ENCODE measurements at regions of chr20 and their contacts with region 1.

Region 1: DNA sequence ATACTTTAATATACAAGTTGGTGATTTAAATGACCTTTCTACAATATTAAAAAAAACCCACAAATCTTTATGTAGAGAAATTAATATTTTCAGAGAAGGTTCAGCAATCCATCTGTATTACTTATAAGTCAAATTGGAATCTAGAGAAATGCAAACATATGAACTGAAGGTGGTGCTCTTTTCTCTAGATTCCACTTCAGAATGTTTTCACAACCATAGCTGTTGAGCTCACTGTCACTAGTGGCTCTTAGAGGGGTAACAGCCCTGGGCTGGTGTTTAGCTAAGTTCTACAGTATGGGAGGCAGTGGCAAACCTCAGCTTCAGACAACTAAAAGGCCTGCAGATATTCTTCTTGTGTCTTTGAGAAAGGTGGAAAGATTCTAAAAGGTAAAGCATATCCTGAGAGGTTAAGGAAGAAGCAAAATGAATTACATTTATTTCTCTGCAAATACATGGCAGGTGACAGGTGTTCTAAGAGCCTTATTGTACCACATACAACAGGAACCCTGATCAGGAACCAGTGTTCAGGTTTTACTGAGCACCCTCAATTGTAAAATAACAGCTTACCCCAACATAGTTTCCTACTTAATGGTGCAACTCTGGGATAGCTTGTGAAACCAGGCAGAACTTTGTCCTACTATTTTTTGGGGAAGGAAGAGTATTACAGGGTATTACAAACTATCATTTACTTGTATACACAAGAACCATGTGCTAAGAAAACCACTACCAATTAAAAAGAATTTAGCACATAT is 56.6 kb upstream of the SAMHD1 start:
- DNase-seq: peak; percentile 50
- ATAC-seq: peak; percentile 89
- H3K4me3 Mint-ChIP-seq: no peak overlapping the region
- H3K27ac Mint-ChIP-seq: peak overlapping the region; percentile 73
- H3K4me1 Mint-ChIP-seq: peaks cover 34% of the 10 kb centered on the region
- H3K27me3 Mint-ChIP-seq: no peaks in the 10 kb centered on the region

Region 2: DNA sequence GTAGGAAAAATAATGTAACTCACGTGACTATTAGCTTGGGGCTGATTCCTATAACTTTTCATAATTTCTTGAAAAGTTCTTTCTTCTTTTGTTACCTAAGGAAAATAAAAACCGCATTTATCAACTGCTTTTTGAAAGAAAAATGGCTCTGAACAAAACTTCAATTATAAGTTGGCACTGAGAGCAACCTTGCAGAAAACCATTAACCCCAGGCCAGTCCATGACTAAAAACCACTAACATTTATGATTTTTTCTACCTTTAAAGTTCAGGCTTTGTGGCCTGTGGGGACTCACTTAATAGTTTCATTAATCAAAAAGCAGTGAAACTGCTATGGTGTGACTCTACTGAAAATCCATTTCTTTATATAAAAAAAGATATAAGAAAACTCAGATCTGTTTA is 12.6 kb after region 1 on chr20:
- CTCF ChIA-PET with region 1: interaction called, 13 read pairs
- POLR2A ChIA-PET with region 1: no interaction called
- DNase-seq: no peak
- ATAC-seq: no peak
- H3K4me3 Mint-ChIP-seq: no peak overlapping the region
- H3K27ac Mint-ChIP-seq: no peak overlapping the region
- H3K4me1 Mint-ChIP-seq: peaks cover 21% of the 10 kb centered on the region
- H3K27me3 Mint-ChIP-seq: no peaks in the 10 kb centered on the region

Region 3: DNA sequence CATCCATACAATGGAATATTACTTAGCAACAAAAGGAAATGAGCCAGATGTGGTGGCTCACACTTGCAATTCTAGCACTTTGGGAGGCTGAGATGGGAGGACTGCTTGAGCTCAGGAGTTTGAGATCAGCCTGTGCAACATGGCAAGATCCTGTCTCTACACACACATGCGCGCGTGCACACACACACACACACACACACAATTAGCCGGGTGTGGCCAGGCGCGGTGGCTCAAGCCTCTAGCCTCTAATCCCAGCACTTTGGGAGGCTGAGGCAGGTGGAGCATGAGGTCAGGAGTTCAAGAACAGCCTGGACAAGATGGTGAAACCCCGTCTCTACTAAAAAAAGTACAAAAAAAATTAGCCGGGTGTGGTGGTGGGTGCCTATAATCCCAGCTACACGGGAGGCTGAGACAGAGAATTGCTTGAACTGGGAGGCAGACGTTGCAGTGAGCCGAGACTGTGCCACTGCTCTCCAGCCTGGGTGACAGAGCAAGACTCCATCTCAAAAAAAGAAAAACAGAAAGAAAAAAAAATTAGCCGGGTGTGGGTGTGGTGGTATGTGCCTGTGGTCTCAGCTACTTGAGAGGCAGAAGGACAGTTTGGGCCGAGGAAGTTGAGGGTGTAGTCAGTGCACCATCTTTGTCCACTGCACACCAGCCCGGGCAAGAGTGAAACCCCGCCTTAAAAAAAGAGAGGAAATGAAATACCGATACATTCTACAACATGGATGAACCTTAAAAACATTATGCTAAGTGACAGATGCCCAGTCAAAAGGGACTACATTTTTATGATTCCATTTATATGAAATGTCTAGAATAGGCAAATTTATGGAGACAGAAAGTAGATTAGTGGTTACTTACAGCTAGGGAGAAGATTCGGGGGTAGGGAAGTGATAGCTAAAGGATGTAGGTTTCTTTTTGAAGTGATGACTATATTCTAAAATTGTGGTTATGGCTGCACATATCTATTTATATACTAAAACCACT is 35.2 kb after region 1 on chr20:
- CTCF ChIA-PET with region 1: interaction called, 13 read pairs
- POLR2A ChIA-PET with region 1: no interaction called
- DNase-seq: peak; percentile 80
- ATAC-seq: peak; percentile 83
- H3K4me3 Mint-ChIP-seq: peak overlapping the region; percentile 82
- H3K27ac Mint-ChIP-seq: peak overlapping the region; percentile 100
- H3K4me1 Mint-ChIP-seq: peaks cover 49% of the 10 kb centered on the region
- H3K27me3 Mint-ChIP-seq: no peaks in the 10 kb centered on the region

Region 4: GRCh38 chr20:37081717-37082289 is 73.7 kb after region 1 on chr20:
- CTCF ChIA-PET with region 1: interaction called, 26 read pairs
- POLR2A ChIA-PET with region 1: interaction called, 4 read pairs
- DNase-seq: peak; percentile 46
- ATAC-seq: peak; percentile 43
- H3K4me3 Mint-ChIP-seq: no peak overlapping the region
- H3K27ac Mint-ChIP-seq: no peak overlapping the region
- H3K4me1 Mint-ChIP-seq: peaks cover 27% of the 10 kb centered on the region
- H3K27me3 Mint-ChIP-seq: no peaks in the 10 kb centered on the region

Region 5: DNA sequence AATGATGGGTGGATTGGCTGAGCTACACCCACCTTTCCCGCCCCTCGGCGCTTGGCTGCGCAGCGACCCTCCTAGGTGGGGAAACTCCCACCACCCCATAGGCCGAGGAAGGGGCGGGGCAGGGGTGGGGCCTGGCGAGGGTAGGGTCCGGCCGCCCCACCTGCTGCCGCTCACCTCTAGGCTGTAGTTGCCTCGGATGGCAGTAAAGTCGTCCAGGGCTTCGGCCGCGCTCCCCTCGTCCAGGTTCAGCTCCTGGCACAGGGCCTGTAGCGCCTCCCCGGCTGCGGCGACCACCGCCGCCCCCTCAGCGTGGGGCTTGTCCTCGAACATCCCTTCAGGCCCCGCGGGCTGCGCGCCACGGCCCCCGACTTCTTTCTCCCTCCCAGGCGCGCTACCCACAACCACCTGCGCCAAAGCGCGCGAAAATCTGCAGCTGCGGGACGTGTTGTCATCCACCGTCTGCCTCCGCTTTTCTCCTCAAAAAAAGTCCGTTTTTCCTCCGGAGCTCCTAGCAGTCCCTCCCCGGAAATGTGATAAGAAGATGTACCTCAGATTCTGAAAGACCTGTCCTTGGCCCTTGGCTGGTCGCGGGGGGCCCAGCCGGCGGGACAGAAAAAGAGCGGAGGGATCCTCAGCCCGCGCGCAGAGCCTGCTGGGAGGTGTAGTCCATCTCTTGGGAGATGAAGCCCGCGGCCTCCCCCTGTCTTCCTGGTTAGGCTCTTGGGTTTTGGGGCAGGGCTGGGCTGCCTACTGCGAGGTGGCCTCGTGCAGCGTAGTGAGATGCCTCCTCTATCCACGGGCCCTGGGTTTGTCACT is 87.7 kb after region 1 on chr20 and contains the start of gene RBL1:
- CTCF ChIA-PET with region 1: interaction called, 10 read pairs
- POLR2A ChIA-PET with region 1: interaction called, 6 read pairs
- DNase-seq: peak; percentile 92
- ATAC-seq: peak; percentile 87
- H3K4me3 Mint-ChIP-seq: peak within 1 kb of the TSS; percentile 99
- H3K27ac Mint-ChIP-seq: peak within 1 kb of the TSS; percentile 100
- H3K4me1 Mint-ChIP-seq: peaks cover 44% of the 10 kb centered on the region
- H3K27me3 Mint-ChIP-seq: no peaks in the 10 kb centered on the region
- total RNA-seq, gene RBL1: 55.6 to 56.3 TPM